ENCODE measurements at regions of chr1 and their contacts with region 1.

Region 1: GRCh38 chr1:117758444-117759316 is 152.8 kb downstream of the TENT5C start:
- DNase-seq: peak; percentile 84 to 88 (median 88)
- ATAC-seq: peak; percentile 83
- H3K4me3 ChIP-seq: no peak overlapping the region
- H3K27ac ChIP-seq: peak overlapping the region; percentile 53 to 75 (median 64)
- H3K4me1 ChIP-seq: peaks cover 71% of the 10 kb centered on the region
- H3K27me3 ChIP-seq: no peaks in the 10 kb centered on the region
- CTCF ChIP-seq: peak; percentile 78 to 96 (median 92)
- POLR2A ChIP-seq: peak in 2 of 3 donors; percentile 33 to 46

Region 2: GRCh38 chr1:117051224-117052064 is 707.2 kb before region 1 on chr1:
- intact Hi-C with region 1: no loop called
- DNase-seq: peak in 1 of 4 donors; percentile 24
- ATAC-seq: peak; percentile 45
- H3K4me3 ChIP-seq: no peak overlapping the region
- H3K27ac ChIP-seq: peak overlapping the region in 2 of 4 donors; percentile 19 to 44
- H3K4me1 ChIP-seq: peaks cover 5% of the 10 kb centered on the region
- H3K27me3 ChIP-seq: no peaks in the 10 kb centered on the region
- CTCF ChIP-seq: no peak
- POLR2A ChIP-seq: no peak

Region 3: DNA sequence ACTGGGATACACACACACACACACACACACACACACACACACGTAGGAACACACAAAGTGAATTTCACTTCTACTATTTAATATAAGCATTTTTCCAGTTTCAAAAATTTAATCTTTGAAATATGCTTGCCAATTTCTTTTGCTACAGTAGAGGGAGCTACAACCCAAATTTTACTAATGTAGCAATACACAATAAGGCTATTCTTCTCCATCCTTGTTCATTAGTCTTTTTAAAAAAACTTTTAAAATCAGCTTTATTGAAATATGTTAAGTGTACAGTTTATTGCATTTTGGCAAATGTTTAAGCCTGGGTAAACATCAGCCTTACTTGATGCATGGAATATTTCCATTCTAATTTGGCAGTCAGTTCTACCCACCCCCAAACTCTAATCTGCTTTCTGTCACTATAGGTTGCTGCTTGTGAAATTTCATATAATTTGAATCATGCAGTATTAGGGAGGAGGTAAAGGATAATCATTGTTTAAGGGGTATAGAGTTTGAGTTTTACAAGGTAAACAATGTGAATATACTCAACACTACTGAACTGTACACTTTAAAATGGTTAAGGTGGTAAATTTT is 245.8 kb before region 1 on chr1:
- intact Hi-C with region 1: loop called (anchors 5 kb)
- DNase-seq: no peak
- ATAC-seq: peak; percentile 55
- H3K4me3 ChIP-seq: no peak overlapping the region
- H3K27ac ChIP-seq: no peak overlapping the region
- H3K4me1 ChIP-seq: no peaks in the 10 kb centered on the region
- H3K27me3 ChIP-seq: no peaks in the 10 kb centered on the region
- CTCF ChIP-seq: peak; percentile 12 to 83 (median 72)
- POLR2A ChIP-seq: no peak

Region 4: GRCh38 chr1:117534995-117535467 is 223.6 kb before region 1 on chr1:
- intact Hi-C with region 1: loop called (anchors 5 kb)
- DNase-seq: peak; percentile 61 to 81 (median 69)
- ATAC-seq: peak; percentile 88
- H3K4me3 ChIP-seq: no peak overlapping the region
- H3K27ac ChIP-seq: peak overlapping the region in 1 of 4 donors; percentile 52
- H3K4me1 ChIP-seq: peaks cover 26% of the 10 kb centered on the region
- H3K27me3 ChIP-seq: no peaks in the 10 kb centered on the region
- CTCF ChIP-seq: peak; percentile 60 to 94 (median 75)
- POLR2A ChIP-seq: no peak

Region 5: GRCh38 chr1:117708323-117709248 is 50.1 kb before region 1 on chr1:
- intact Hi-C with region 1: no loop called
- DNase-seq: no peak
- ATAC-seq: no peak
- H3K4me3 ChIP-seq: no peak overlapping the region
- H3K27ac ChIP-seq: no peak overlapping the region
- H3K4me1 ChIP-seq: peaks cover 17% of the 10 kb centered on the region
- H3K27me3 ChIP-seq: no peaks in the 10 kb centered on the region
- CTCF ChIP-seq: no peak
- POLR2A ChIP-seq: no peak

Measured in body of pancreas (tissue), 4 donors.